Activated CD4-positive, alpha-beta T cell treated with anti-CD3 and anti-CD28 coated beads for 36 hours (primary cell): ENCODE measurements at regions of chr2 and their contacts with region 1.

Region 1: GRCh38 chr2:234500394-234501006 is 3.6 kb upstream of the ARL4C start:
- DNase-seq: peak; percentile 81
- ATAC-seq: peak; percentile 69
- H3K4me3 Mint-ChIP-seq: no peak overlapping the region
- H3K27ac Mint-ChIP-seq: peak overlapping the region; percentile 32
- H3K4me1 Mint-ChIP-seq: peaks cover 27% of the 10 kb centered on the region
- H3K27me3 Mint-ChIP-seq: no peaks in the 10 kb centered on the region

Region 2: DNA sequence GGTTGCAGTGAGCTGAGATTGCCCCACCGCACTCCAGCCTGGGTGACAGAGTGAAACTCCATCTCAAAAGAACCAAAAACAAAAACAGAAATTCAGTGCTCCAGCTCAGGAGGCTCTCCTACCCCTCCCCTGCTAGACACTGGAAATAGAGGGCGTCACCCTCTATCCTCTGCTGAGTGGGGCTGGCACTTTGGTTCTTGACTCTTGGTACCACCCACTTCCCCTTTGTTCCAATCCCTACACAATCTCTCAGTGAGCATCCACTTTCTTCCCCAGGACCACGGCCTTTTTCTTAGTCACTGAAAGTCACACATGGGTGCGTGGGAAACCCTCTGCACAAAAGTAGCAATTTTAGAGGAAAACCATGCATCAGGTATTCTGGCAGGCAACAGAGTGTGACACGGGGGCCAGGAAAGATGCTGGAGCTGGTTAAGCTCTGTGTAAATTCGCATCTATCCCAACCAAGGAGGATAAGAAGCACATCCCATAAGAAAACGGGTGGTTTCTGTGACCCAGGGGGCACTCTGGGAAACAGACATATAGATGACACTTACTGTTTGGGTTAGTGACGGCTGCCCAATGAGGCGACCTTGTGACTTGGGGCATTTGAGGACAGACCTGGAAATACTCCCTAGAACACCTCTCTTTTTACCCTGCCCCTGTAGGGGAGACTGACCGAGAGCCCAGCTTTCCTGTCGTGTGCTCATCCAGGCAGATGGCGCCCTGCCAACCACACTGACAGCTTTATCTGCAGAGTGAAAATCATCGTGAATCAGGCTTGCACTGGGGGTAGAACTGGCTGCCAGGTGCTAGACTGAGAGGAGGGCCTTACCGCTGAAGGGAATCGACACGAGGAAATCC is 653.9 kb before region 1 on chr2:
- CTCF ChIA-PET with region 1: no interaction called
- POLR2A ChIA-PET with region 1: no interaction called
- intact Hi-C with region 1: no loop called
- DNase-seq: no peak
- ATAC-seq: no peak
- H3K4me3 Mint-ChIP-seq: no peak overlapping the region
- H3K27ac Mint-ChIP-seq: no peak overlapping the region
- H3K4me1 Mint-ChIP-seq: no peaks in the 10 kb centered on the region
- H3K27me3 Mint-ChIP-seq: no peaks in the 10 kb centered on the region

Region 3: GRCh38 chr2:233976690-233977294 is 523.7 kb before region 1 on chr2:
- CTCF ChIA-PET with region 1: no interaction called
- POLR2A ChIA-PET with region 1: no interaction called
- intact Hi-C with region 1: loop called (anchors 1 kb)
- DNase-seq: no peak
- ATAC-seq: no peak
- H3K4me3 Mint-ChIP-seq: no peak overlapping the region
- H3K27ac Mint-ChIP-seq: no peak overlapping the region
- H3K4me1 Mint-ChIP-seq: peaks cover 22% of the 10 kb centered on the region
- H3K27me3 Mint-ChIP-seq: no peaks in the 10 kb centered on the region

Region 4: GRCh38 chr2:234135720-234136221 is 364.7 kb before region 1 on chr2:
- CTCF ChIA-PET with region 1: interaction called, 37 read pairs
- POLR2A ChIA-PET with region 1: no interaction called
- intact Hi-C with region 1: loop called (anchors 1 kb)
- DNase-seq: peak; percentile 72
- ATAC-seq: peak; percentile 87
- H3K4me3 Mint-ChIP-seq: no peak overlapping the region
- H3K27ac Mint-ChIP-seq: no peak overlapping the region
- H3K4me1 Mint-ChIP-seq: peaks cover 23% of the 10 kb centered on the region
- H3K27me3 Mint-ChIP-seq: no peaks in the 10 kb centered on the region

Region 5: DNA sequence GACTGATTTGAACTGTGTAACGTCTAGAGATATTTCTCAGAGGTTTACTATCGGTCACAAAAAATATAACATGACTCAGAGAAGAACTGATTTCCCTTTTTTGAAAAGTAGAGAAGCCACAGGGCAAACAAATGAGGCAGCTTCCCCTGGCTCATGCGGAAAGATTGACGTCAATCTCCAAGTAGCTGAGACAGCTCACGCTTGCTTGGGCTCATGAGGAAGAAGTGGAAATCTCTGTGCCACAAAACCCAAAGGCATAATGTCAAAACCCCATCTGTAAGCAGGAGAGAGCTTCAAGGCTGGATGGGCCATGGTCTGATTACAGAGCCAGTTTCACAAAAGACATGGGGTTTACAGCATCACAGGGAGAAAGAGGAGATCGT is 191.7 kb before region 1 on chr2:
- CTCF ChIA-PET with region 1: interaction called, 10 read pairs
- POLR2A ChIA-PET with region 1: interaction called, 4 read pairs
- intact Hi-C with region 1: no loop called
- DNase-seq: peak; percentile 86
- ATAC-seq: peak; percentile 86
- H3K4me3 Mint-ChIP-seq: peak overlapping the region; percentile 42
- H3K27ac Mint-ChIP-seq: peak overlapping the region; percentile 99
- H3K4me1 Mint-ChIP-seq: peaks cover 66% of the 10 kb centered on the region
- H3K27me3 Mint-ChIP-seq: no peaks in the 10 kb centered on the region

Region 6: DNA sequence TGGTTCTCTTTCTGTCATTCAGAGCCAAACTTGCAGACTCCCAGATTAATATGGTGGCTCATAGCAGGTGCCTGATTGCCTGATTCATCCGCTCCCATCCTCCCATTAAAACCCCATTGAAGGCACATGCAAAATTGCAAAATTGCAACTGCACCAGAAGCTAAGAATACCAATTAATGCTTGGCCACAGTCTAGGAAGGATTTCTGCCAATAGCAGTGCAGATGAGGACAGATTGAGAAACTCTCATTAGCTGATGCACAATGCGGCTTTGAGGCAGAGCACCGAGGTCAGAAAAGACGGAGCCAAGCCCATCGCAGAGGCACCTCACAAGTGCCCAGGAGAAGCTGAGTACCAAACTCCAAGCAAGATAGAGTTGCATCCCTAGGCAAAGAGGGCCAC is 176.4 kb before region 1 on chr2:
- CTCF ChIA-PET with region 1: no interaction called
- POLR2A ChIA-PET with region 1: no interaction called
- intact Hi-C with region 1: no loop called
- DNase-seq: no peak
- ATAC-seq: no peak
- H3K4me3 Mint-ChIP-seq: no peak overlapping the region
- H3K27ac Mint-ChIP-seq: peak overlapping the region; percentile 68
- H3K4me1 Mint-ChIP-seq: peaks cover 34% of the 10 kb centered on the region
- H3K27me3 Mint-ChIP-seq: no peaks in the 10 kb centered on the region

Region 7: DNA sequence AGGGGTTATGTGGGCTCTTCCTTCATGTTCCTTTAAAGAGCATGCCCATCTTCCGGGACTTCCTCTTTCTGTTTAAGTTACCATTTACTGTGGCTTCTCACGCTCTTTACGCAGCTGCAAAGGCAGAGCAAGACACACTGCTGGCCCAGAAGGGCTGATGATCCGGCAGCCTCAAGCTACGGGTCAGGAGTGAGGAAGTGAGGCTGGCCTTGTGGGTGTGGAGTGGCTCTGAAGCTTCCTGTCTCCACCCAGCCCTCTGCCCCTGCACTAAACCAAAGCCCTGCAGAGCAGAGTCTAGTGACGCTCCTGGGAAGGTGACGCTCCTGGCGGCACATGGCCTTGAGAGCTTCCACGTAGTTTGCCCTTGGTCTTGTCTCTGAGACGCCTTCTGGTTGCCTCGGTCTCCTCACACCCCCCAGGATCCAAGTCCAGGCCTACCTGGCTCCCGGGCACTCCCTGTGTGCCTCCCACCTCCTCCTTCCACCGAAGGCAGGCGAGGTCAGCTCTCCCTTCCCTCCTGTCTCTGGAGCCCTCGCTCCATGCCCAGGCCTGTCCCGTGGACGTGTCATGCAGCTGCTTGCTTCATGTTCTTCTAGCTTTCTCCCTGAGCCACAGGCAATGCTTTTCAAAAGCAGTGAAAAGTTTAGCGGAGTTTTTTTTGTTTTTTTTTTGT is 54.0 kb before region 1 on chr2:
- CTCF ChIA-PET with region 1: interaction called, 6 read pairs
- POLR2A ChIA-PET with region 1: interaction called, 12 read pairs
- intact Hi-C with region 1: no loop called
- DNase-seq: peak; percentile 86
- ATAC-seq: peak; percentile 89
- H3K4me3 Mint-ChIP-seq: peak overlapping the region; percentile 61
- H3K27ac Mint-ChIP-seq: peak overlapping the region; percentile 94
- H3K4me1 Mint-ChIP-seq: peaks cover 93% of the 10 kb centered on the region
- H3K27me3 Mint-ChIP-seq: no peaks in the 10 kb centered on the region